Mammary epithelial cell (primary cell): ENCODE measurements at regions of chr3 and their contacts with region 1.

Region 1: DNA sequence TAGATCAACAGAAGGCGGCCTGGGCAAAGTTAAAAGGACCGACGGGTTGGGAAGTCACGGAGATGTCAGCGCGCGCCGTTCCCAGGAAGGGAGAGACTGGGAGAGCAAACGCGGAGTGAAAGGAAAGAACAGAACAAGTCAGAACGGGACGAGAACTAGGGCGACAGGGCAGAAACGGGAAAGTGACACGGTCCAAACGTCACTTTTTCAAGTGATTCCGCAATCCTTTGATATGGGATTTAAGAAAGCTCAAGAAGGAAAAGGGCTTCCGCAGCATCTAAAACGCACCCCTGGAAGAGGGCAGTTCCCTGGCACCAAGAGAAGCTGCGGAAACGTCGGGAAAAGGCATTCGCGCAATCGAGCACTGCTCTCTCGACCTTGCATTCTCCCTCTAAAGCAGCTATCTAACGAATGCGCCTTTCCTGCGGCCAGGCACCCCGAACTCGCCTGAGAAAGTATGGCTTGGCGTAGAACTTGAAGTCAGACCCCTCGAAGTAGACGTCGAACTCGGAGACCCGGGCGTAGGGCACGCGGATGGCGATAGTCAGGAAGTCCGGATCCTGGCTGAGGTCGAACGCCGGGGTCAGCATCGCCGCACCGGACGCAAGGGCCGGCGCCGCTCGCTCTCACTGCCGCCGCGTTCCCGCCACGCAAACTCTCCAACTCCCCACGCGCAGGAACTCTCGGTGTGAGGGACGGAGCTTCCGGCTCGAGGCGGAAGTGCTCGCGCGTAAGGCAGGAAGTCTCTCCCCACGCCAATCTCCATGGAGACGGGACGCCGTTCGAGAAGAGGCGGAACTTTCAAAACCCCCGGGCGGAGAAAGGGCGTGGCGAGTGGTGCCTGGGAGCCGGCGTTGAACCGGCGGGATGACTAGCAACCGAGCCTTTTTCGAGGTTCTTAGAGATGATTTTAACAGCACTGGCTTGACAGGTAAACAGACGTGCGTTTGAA is at the start of gene SHQ1:
- DNase-seq: peak; percentile 95
- H3K4me3 ChIP-seq: peak within 1 kb of the TSS; percentile 90 to 99 (median 96)
- H3K27ac ChIP-seq: peak within 1 kb of the TSS; percentile 73
- H3K4me1 ChIP-seq: peaks cover 26% of the 10 kb centered on the region
- H3K27me3 ChIP-seq: no peaks in the 10 kb centered on the region
- CTCF ChIP-seq: no peak
- total RNA-seq, gene SHQ1: 17.0 to 23.0 TPM

Region 2: DNA sequence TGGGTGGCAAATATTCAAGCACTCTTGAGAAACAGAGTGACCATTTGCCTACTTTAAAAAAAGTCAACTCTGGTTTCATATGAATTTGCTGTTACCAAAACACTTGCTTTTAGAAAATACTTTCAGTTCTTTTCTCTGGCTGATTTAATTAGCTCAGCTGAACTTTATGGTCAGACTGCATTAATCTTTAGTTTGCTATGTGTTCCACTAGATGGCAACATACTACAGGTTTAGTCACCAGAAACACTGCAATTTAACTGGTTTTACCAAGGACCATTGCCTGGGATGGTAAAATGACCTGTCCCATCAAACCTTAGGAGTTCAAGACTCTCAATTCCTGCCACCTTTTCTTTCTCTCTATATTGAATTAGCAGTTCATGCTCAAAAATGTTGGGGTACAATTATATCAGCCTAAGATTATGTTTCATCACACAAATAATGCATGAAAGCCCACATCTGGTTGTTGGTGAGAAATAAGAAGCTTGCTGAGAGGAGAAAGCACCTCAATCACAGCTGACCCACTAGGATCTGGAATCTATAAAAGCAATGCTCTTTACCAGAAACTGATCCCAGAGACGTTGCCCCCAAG is 1137.0 kb before region 1 on chr3:
- CTCF ChIA-PET with region 1: no interaction called
- dilution Hi-C with region 1: no loop called
- in situ Hi-C with region 1: loop called in 1 of 2 experiments (anchors 25 kb)
- intact Hi-C with region 1: no loop called
- DNase-seq: peak; percentile 33
- H3K4me3 ChIP-seq: no peak overlapping the region
- H3K27ac ChIP-seq: no peak overlapping the region
- H3K4me1 ChIP-seq: peaks cover 6% of the 10 kb centered on the region
- H3K27me3 ChIP-seq: no peaks in the 10 kb centered on the region
- CTCF ChIP-seq: peak; percentile 63 to 64

Region 3: GRCh38 chr3:72887705-72888545 is 39.9 kb after region 1 on chr3 and contains the start of gene GXYLT2:
- CTCF ChIA-PET with region 1: no interaction called
- dilution Hi-C with region 1: no loop called
- in situ Hi-C with region 1: no loop called
- intact Hi-C with region 1: loop called (anchors 2 kb)
- DNase-seq: peak; percentile 64
- H3K4me3 ChIP-seq: peak within 1 kb of the TSS; percentile 46 to 55 (median 52)
- H3K27ac ChIP-seq: peak within 1 kb of the TSS; percentile 23
- H3K4me1 ChIP-seq: peaks cover 56% of the 10 kb centered on the region
- H3K27me3 ChIP-seq: no peaks in the 10 kb centered on the region
- CTCF ChIP-seq: no peak
- total RNA-seq, gene GXYLT2: 3.9 to 9.3 TPM

Region 4: DNA sequence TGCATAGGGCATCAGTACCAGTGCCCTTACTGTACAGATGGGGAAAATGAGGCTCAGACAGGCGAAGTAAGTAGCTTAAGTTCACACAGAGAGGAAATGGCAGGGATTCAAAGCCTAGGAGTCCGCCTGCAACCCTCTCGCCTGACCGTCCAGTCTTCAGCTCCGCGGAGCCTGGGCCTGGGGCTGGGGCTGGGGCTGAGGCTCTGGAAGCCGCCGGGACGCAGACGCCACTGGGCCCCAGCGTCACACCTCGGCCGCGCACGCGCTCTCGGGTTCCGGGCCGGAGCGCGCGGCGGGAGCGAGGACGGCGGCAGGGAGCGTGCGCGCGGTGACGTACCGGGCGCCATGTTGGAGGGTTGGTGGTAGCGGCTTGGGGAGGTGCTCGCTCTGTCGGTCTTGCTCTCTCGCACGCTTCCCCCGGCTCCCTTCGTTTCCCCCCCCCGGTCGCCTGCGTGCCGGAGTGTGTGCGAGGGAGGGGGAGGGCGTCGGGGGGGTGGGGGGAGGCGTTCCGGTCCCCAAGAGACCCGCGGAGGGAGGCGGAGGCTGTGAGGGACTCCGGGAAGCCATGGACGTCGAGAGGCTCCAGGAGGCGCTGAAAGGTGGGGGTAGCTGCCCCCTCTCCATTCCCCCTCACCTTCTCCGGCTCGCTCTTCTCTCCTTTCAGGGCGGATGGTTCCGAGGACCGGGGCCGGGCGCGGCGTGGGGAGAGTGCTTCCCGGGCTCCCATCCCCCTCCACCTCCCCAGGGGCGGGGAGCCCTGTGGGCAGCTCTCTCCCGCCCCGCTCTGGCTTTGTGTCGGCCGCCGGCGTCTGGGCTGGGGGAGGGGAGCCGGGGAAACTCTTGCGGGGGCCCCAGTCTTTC is 148.7 kb after region 1 on chr3 and contains the start of gene PPP4R2:
- CTCF ChIA-PET with region 1: no interaction called
- dilution Hi-C with region 1: no loop called
- in situ Hi-C with region 1: no loop called
- intact Hi-C with region 1: loop called (anchors 1 kb)
- DNase-seq: peak; percentile 86
- H3K4me3 ChIP-seq: peak within 1 kb of the TSS; percentile 71 to 84 (median 82)
- H3K27ac ChIP-seq: peak within 1 kb of the TSS; percentile 69
- H3K4me1 ChIP-seq: peaks cover 29% of the 10 kb centered on the region
- H3K27me3 ChIP-seq: no peaks in the 10 kb centered on the region
- CTCF ChIP-seq: peak in 1 of 2 donors; percentile 2
- total RNA-seq, gene PPP4R2: 57.0 to 74.4 TPM

Region 5: GRCh38 chr3:73086071-73086494 is 238.1 kb after region 1 on chr3:
- CTCF ChIA-PET with region 1: no interaction called
- dilution Hi-C with region 1: no loop called
- in situ Hi-C with region 1: loop called in 1 of 2 experiments (anchors 5 kb)
- intact Hi-C with region 1: loop called (anchors 1 kb)
- DNase-seq: no peak
- H3K4me3 ChIP-seq: no peak overlapping the region
- H3K27ac ChIP-seq: no peak overlapping the region
- H3K4me1 ChIP-seq: no peaks in the 10 kb centered on the region
- H3K27me3 ChIP-seq: no peaks in the 10 kb centered on the region
- CTCF ChIP-seq: peak; percentile 66 to 74